B cell (primary cell): ENCODE measurements at regions of chr17 and their contacts with region 1.

Region 1: GRCh38 chr17:68457539-68458259 is 403 bp upstream of the WIPI1 start:
- DNase-seq: peak; percentile 99
- ATAC-seq: peak; percentile 97
- H3K4me3 ChIP-seq: peak overlapping the region; percentile 55 to 67 (median 63)
- H3K4me3 Mint-ChIP-seq: peak overlapping the region; percentile 82
- H3K27ac ChIP-seq: peak overlapping the region; percentile 56 to 75
- H3K27ac Mint-ChIP-seq: peak overlapping the region; percentile 65
- H3K4me1 ChIP-seq: peaks cover 10 to 18% of the 10 kb centered on the region in 2 donors
- H3K4me1 Mint-ChIP-seq: peaks cover 20% of the 10 kb centered on the region
- H3K27me3 ChIP-seq: no peaks in the 10 kb centered on the region
- H3K27me3 Mint-ChIP-seq: no peaks in the 10 kb centered on the region
- CTCF ChIP-seq: no peak

Region 2: DNA sequence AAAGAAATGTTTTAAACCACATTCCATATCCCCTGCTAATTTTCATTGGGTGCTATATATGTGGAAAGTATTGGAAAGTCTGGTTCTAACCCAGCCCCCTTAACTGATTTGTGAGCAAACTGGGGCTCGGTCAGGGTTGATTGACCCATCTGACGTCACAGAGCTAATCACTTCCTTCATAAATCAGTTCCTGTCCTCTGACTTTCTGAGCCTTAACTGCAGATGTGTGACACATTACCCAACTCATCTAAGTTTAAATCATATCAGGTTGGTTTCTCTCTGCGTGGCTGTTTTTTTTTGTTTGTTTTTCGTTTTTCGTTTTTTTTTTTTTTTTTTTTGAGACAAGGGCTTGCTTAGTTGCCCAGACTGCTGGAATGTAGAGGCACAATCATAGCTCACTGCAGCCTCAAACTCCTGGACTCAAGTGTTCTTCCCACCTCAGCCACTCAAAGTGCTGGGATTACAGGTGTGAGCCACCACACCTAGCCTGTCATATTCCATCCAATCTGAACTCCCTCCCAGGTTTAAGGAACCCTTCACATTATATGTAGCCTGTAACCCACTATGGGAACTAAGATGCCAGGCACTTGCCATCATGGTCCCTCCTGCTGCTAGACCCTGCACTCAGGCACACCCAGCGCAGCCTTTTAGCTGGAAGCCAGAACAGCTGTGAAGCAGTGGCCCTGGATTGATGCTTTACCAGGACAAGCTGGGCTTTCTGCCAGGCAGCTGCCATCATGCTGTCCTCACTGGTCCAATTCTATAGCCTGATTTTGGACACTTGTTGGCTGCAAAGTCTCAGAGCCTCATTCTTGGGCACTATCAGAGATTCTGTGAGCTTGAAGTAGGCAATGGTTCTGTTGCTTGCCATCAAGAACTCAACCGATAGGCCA is 639.3 kb before region 1 on chr17:
- CTCF ChIA-PET with region 1: no interaction called
- POLR2A ChIA-PET with region 1: no interaction called
- intact Hi-C with region 1: loop called (anchors 5 kb)
- DNase-seq: peak; percentile 93
- ATAC-seq: peak; percentile 60
- H3K4me3 ChIP-seq: peak overlapping the region in 2 of 5 experiments; percentile 10 to 29
- H3K4me3 Mint-ChIP-seq: peak overlapping the region; percentile 73
- H3K27ac ChIP-seq: peak overlapping the region; percentile 71 to 78
- H3K27ac Mint-ChIP-seq: peak overlapping the region; percentile 92
- H3K4me1 ChIP-seq: peaks cover 56 to 73% of the 10 kb centered on the region in 2 donors
- H3K4me1 Mint-ChIP-seq: peaks cover 65% of the 10 kb centered on the region
- H3K27me3 ChIP-seq: no peaks in the 10 kb centered on the region
- H3K27me3 Mint-ChIP-seq: no peaks in the 10 kb centered on the region
- CTCF ChIP-seq: no peak

Region 3: GRCh38 chr17:68172461-68172954 is 285.2 kb before region 1 on chr17:
- CTCF ChIA-PET with region 1: interaction called, 17 read pairs
- POLR2A ChIA-PET with region 1: no interaction called
- intact Hi-C with region 1: no loop called
- DNase-seq: peak; percentile 87
- ATAC-seq: peak; percentile 94
- H3K4me3 ChIP-seq: no peak overlapping the region
- H3K4me3 Mint-ChIP-seq: no peak overlapping the region
- H3K27ac ChIP-seq: no peak overlapping the region
- H3K27ac Mint-ChIP-seq: no peak overlapping the region
- H3K4me1 ChIP-seq: peaks cover 0 to 9% of the 10 kb centered on the region in 2 donors
- H3K4me1 Mint-ChIP-seq: peaks cover 3% of the 10 kb centered on the region
- H3K27me3 ChIP-seq: no peaks in the 10 kb centered on the region
- H3K27me3 Mint-ChIP-seq: no peaks in the 10 kb centered on the region
- CTCF ChIP-seq: peak; percentile 99

Region 4: GRCh38 chr17:68247445-68248198 is 210.1 kb before region 1 on chr17 and contains the start of gene AMZ2:
- CTCF ChIA-PET with region 1: interaction called, 3 read pairs
- POLR2A ChIA-PET with region 1: interaction called, 8 read pairs
- intact Hi-C with region 1: loop called (anchors 1 kb)
- DNase-seq: peak; percentile 99
- ATAC-seq: peak; percentile 89
- H3K4me3 ChIP-seq: peak within 1 kb of the TSS; percentile 24 to 81 (median 76)
- H3K4me3 Mint-ChIP-seq: peak within 1 kb of the TSS; percentile 96
- H3K27ac ChIP-seq: peak within 1 kb of the TSS; percentile 96 to 98
- H3K27ac Mint-ChIP-seq: peak within 1 kb of the TSS; percentile 99
- H3K4me1 ChIP-seq: peaks cover 31 to 34% of the 10 kb centered on the region in 2 donors
- H3K4me1 Mint-ChIP-seq: peaks cover 54% of the 10 kb centered on the region
- H3K27me3 ChIP-seq: no peaks in the 10 kb centered on the region
- H3K27me3 Mint-ChIP-seq: no peaks in the 10 kb centered on the region
- CTCF ChIP-seq: no peak
- total RNA-seq, gene AMZ2: 70.7 and 74.3 TPM in 2 replicates

Region 5: GRCh38 chr17:68327823-68328570 is 129.7 kb before region 1 on chr17:
- CTCF ChIA-PET with region 1: no interaction called
- POLR2A ChIA-PET with region 1: no interaction called
- intact Hi-C with region 1: no loop called
- DNase-seq: no peak
- ATAC-seq: no peak
- H3K4me3 ChIP-seq: no peak overlapping the region
- H3K4me3 Mint-ChIP-seq: no peak overlapping the region
- H3K27ac ChIP-seq: no peak overlapping the region
- H3K27ac Mint-ChIP-seq: no peak overlapping the region
- H3K4me1 ChIP-seq: no peaks in the 10 kb centered on the region
- H3K4me1 Mint-ChIP-seq: no peaks in the 10 kb centered on the region
- H3K27me3 ChIP-seq: peaks cover 0 to 5% (median 0%) of the 10 kb centered on the region in 4 experiments
- H3K27me3 Mint-ChIP-seq: peaks cover 3% of the 10 kb centered on the region
- CTCF ChIP-seq: no peak

Region 6: GRCh38 chr17:68424942-68425386 is 32.7 kb before region 1 on chr17:
- CTCF ChIA-PET with region 1: no interaction called
- POLR2A ChIA-PET with region 1: no interaction called
- intact Hi-C with region 1: no loop called
- DNase-seq: no peak
- ATAC-seq: no peak
- H3K4me3 ChIP-seq: no peak overlapping the region
- H3K4me3 Mint-ChIP-seq: no peak overlapping the region
- H3K27ac ChIP-seq: no peak overlapping the region
- H3K27ac Mint-ChIP-seq: no peak overlapping the region
- H3K4me1 ChIP-seq: no peaks in the 10 kb centered on the region
- H3K4me1 Mint-ChIP-seq: no peaks in the 10 kb centered on the region
- H3K27me3 ChIP-seq: no peaks in the 10 kb centered on the region
- H3K27me3 Mint-ChIP-seq: no peaks in the 10 kb centered on the region
- CTCF ChIP-seq: no peak

Region 7: GRCh38 chr17:68435876-68436842 is 21.5 kb before region 1 on chr17:
- CTCF ChIA-PET with region 1: interaction called, 40 read pairs
- POLR2A ChIA-PET with region 1: interaction called, 16 read pairs
- intact Hi-C with region 1: loop called (anchors 2 kb)
- DNase-seq: peak; percentile 86
- ATAC-seq: peak; percentile 74
- H3K4me3 ChIP-seq: no peak overlapping the region
- H3K4me3 Mint-ChIP-seq: peak overlapping the region; percentile 63
- H3K27ac ChIP-seq: no peak overlapping the region
- H3K27ac Mint-ChIP-seq: peak overlapping the region; percentile 13
- H3K4me1 ChIP-seq: peaks cover 39 to 40% of the 10 kb centered on the region in 2 donors
- H3K4me1 Mint-ChIP-seq: peaks cover 50% of the 10 kb centered on the region
- H3K27me3 ChIP-seq: no peaks in the 10 kb centered on the region
- H3K27me3 Mint-ChIP-seq: no peaks in the 10 kb centered on the region
- CTCF ChIP-seq: peak; percentile 85

Region 8: DNA sequence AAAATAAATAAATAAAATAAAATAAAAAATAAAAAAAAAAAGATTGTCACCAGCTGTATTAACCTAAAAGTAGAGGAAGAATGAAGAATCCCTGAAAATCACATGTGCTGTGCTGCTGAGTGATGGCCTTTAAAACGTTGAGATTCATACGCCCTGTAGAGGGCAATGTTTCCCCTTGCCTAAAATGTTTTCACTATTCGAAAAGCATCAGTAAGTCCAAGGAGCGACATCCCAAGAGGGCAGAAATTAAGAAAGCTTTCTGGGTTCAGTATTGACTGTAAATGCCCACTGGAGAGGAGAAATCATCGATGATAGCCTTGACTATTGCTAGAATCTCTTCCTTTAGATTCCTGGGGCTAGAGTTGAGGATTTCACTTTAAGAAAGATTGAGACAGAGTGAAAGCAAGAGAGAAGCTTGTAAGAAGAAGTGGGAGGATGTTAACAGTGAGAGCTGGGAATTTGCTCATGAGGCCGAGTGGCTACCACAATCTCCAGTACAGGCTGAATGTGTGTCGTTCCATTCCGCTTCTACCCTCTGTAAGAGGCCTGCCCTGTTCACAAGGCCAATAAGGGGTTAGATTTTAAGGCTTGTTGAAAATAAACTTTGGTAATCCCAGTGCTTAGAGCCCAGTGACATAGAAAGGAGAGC is 314.3 kb after region 1 on chr17:
- CTCF ChIA-PET with region 1: no interaction called
- POLR2A ChIA-PET with region 1: no interaction called
- intact Hi-C with region 1: no loop called
- DNase-seq: peak; percentile 65
- ATAC-seq: peak; percentile 49
- H3K4me3 ChIP-seq: peak overlapping the region in 1 of 5 experiments; percentile 25
- H3K4me3 Mint-ChIP-seq: peak overlapping the region; percentile 68
- H3K27ac ChIP-seq: no peak overlapping the region
- H3K27ac Mint-ChIP-seq: peak overlapping the region; percentile 26
- H3K4me1 ChIP-seq: no peaks in the 10 kb centered on the region
- H3K4me1 Mint-ChIP-seq: peaks cover 20% of the 10 kb centered on the region
- H3K27me3 ChIP-seq: no peaks in the 10 kb centered on the region
- H3K27me3 Mint-ChIP-seq: no peaks in the 10 kb centered on the region
- CTCF ChIP-seq: peak; percentile 72